Tibial artery (tissue), 4 donors: ENCODE measurements at regions of chr1 and their contacts with region 1.

Region 1: GRCh38 chr1:168082008-168082876 is 54.5 kb downstream of the GPR161 start:
- DNase-seq: peak; percentile 69 to 84
- H3K4me3 ChIP-seq: no peak overlapping the region
- H3K27ac ChIP-seq: peak overlapping the region; percentile 74 to 79
- H3K4me1 ChIP-seq: peaks cover 0 to 39% (median 33%) of the 10 kb centered on the region in 4 donors
- H3K27me3 ChIP-seq: no peaks in the 10 kb centered on the region
- CTCF ChIP-seq: peak; percentile 74 to 88

Region 2: DNA sequence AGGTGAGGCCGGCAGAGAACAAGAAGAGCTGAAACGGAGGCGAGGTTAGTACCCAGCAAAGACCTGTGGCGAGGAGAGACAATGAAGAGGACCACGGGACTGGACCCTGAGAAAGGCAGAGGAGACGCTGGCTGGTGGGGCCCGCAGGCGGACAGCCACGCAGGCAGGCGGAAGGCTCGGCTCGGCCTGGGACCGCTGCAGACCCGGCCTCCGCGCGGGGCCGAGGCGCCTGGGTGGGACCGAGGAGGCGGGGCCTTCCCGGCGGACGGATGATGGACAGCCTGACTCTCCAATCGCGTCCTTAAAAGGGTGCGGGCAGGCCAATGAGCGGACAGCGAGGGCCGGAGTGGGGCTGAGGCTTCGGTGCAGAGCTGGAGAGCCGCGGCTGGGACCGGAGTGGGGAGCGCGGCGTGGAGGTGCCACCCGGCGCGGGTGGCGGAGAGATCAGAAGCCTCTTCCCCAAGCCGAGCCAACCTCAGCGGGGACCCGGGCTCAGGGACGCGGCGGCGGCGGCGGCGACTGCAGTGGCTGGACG is 360.6 kb before region 1 on chr1 and contains the start of gene MPZL1:
- intact Hi-C with region 1: loop called (anchors 10 kb)
- DNase-seq: peak; percentile 96 to 98
- H3K4me3 ChIP-seq: peak within 1 kb of the TSS; percentile 79 to 84
- H3K27ac ChIP-seq: peak within 1 kb of the TSS; percentile 87
- H3K4me1 ChIP-seq: peaks cover 0 to 39% (median 13%) of the 10 kb centered on the region in 4 donors
- H3K27me3 ChIP-seq: no peaks in the 10 kb centered on the region
- CTCF ChIP-seq: no peak

Region 3: DNA sequence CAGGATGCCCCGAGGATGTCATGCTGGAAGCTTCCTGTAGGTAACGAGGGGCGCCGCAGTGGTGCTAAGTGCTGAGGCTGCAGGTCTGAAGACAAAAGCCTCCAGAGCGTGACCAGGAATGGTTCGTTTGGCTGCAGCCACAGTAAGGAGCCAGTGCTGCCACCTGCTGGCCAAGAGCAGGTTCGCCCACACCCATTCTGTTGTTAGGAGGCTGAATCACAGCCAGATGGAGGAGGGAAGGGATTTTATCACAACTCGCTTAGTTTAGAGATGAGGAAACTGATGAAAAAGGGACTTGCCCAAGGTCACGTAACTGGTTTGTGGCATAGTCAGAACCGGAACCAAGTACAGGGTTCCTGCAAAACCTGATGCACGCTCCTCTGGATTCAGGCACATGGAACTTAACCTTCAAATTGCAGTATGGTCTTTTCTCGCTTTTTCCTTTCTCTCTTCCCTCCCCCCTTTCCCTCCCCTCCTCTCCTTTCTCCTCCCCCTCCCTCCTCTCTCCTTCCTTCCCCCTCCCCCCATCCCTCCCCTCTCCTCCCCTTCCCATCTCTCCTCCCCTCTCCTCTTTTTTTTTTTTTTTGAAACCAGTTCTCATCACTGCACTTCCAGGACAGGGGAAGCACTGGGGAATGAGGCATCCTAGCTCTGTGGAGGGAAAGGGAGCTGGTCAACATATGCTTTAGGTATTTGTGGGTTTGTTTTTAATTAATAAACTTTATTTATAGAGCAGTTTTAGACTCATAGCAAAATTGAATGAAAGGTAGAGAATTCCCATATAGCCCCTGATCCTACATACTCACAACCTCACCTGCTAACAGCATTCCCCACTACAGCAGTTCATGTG is 278.7 kb before region 1 on chr1:
- intact Hi-C with region 1: loop called (anchors 10 kb)
- DNase-seq: peak; percentile 93 to 95
- H3K4me3 ChIP-seq: no peak overlapping the region
- H3K27ac ChIP-seq: no peak overlapping the region
- H3K4me1 ChIP-seq: peaks cover 0 to 9% (median 5%) of the 10 kb centered on the region in 4 donors
- H3K27me3 ChIP-seq: no peaks in the 10 kb centered on the region
- CTCF ChIP-seq: peak; percentile 89 to 92

Region 4: GRCh38 chr1:168121401-168122011 is 39.3 kb after region 1 on chr1:
- intact Hi-C with region 1: loop called (anchors 5 kb)
- DNase-seq: peak; percentile 61 to 94
- H3K4me3 ChIP-seq: no peak overlapping the region
- H3K27ac ChIP-seq: peak overlapping the region; percentile 31 to 74
- H3K4me1 ChIP-seq: peaks cover 0 to 21% (median 9%) of the 10 kb centered on the region in 4 donors
- H3K27me3 ChIP-seq: no peaks in the 10 kb centered on the region
- CTCF ChIP-seq: no peak

Region 5: DNA sequence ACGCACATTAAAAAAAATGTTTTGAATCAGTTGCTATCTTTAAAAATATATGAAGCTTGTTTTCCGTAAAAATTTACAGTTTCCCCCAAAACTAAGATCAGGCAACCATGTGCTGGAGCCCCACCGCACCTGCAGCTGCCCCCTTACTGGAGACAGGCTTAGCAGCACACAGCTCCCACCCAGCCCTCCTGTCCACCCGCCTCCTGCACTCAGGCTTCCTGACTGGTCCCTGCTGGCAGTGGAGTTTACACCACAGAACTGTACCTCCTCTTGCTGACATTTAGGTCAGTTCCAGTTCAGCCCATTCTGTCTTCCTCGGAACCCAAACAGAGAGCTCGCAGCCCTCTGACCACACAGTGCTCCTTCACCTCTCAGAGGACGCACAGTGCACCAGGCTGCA is 52.4 kb after region 1 on chr1:
- intact Hi-C with region 1: no loop called
- DNase-seq: no peak
- H3K4me3 ChIP-seq: peak overlapping the region in 1 of 2 donors; percentile 94
- H3K27ac ChIP-seq: no peak overlapping the region
- H3K4me1 ChIP-seq: peaks cover 0 to 23% (median 18%) of the 10 kb centered on the region in 4 donors
- H3K27me3 ChIP-seq: no peaks in the 10 kb centered on the region
- CTCF ChIP-seq: no peak

Region 6: DNA sequence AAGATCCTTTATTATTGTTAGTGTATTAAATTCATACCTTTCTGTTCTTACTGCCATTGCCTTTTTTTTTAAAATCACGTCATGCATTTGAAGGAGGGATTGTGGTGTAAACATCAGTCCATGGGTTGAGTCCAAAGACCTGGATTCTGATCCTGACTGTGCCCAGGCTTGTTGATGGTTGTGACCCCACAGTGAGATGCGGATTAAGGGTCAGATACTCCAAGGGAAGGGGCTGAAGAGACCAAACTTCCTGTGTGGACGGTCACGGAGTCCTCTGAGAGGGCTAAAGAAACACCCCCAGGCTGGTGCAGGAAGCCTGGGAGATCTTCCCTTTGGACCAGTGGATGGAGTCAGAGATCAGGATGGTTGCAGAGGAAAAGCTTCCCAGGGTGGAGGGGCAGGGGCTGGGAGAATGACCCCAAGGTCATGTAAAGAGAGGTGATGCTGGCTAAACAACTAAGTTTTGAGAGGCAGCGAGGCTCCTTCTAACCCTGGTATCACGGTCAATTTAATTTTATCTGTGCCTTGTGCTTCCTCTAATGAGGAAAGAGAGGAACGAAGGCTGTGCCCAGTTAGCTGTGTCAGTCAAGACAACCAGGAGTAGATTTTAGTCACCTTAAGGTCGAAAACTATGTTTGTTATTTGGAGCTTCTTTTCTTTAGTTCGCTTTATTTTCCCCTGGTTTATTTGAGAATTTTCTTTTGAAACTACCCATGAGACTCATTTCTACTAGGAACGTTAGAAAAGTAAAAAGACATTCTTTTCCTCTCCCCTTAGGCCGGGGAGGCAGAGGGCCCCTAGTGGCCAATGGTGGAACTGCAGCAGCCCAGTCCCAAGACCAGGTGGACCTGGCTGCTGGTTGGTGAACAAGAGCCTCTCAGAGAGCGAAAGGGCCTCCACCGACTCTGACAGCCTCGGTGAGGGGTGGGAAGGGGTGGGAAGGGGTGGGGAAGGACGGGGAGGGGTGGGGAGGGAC is 63.2 kb after region 1 on chr1:
- intact Hi-C with region 1: loop called (anchors 10 kb)
- DNase-seq: peak; percentile 83 to 90
- H3K4me3 ChIP-seq: no peak overlapping the region
- H3K27ac ChIP-seq: peak overlapping the region in 1 of 2 donors; percentile 33
- H3K4me1 ChIP-seq: peaks cover 0 to 9% (median 0%) of the 10 kb centered on the region in 4 donors
- H3K27me3 ChIP-seq: no peaks in the 10 kb centered on the region
- CTCF ChIP-seq: peak; percentile 91 to 98

Region 7: DNA sequence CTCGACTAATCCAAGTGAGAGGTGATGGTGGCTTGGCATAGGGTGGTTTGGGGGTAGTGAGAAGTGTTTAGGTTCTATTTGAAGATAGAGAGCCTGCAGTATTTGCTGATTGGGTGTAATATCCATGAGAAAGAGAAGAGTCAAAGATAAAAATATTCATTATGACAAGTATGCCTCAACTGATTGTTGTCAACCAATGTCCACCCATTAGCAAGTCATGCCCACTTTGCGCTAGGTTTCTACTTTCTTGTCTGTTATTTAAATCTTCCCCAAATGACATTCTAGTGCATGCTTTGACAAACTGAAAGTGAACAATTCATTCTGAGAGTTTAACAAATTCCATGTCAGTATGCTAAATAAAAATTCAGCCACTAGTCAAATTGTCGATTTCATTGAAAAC is 490.4 kb after region 1 on chr1:
- intact Hi-C with region 1: no loop called
- DNase-seq: no peak
- H3K4me3 ChIP-seq: no peak overlapping the region
- H3K27ac ChIP-seq: no peak overlapping the region
- H3K4me1 ChIP-seq: no peaks in the 10 kb centered on the region
- H3K27me3 ChIP-seq: no peaks in the 10 kb centered on the region
- CTCF ChIP-seq: no peak